ENCODE measurements at regions of chr17 and their contacts with region 1.

Region 1: DNA sequence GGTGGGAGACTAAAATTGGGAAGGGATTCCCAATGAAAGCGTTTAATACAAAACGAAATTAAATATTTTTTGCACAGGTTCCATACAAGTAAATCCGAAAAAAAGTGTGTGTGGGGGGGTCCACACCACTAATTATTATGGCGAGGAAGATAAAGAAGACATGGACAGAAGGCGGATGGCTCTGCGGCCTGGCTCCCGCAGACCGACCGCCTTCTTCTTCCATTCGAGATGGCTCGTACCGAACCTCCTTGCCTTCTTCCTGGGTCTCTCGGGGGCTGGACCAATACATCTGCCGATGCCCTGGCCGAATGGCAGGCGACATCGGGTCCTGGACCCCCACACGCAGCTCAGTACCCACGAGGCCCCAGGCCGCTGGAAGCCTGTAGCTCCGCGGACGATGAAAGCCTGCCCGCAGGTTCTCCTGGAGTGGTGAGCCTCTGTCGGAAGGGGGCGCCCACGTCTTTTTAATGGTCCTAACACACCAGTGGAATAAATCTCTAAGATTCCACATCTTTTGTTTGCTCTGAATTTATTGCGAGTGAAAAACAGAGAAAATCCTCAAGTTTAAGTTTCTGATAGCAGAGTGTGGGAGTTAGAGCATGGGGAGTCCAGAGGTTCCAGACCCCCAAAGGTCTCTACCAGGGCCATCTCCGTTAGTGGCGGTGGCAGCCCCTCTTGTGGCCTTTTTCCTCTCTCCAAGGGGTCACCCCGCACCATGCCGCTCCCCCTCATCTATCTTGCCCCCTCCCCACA is 1.4 kb downstream of the PRAC2 start:
- DNase-seq: peak; percentile 54 to 79 (median 64)
- H3K4me3 ChIP-seq: peak overlapping the region; percentile 33
- H3K4me3 Mint-ChIP-seq: peak overlapping the region; percentile 31 to 79 (median 75)
- H3K27ac ChIP-seq: no peak overlapping the region
- H3K27ac Mint-ChIP-seq: peak overlapping the region in 3 of 8 donors; percentile 38 to 72 (median 70)
- H3K4me1 ChIP-seq: peaks cover 39% of the 10 kb centered on the region
- H3K4me1 Mint-ChIP-seq: peaks cover 40 to 51% (median 43%) of the 10 kb centered on the region in 3 donors
- H3K27me3 ChIP-seq: peaks cover 92% of the 10 kb centered on the region
- H3K27me3 Mint-ChIP-seq: peaks cover 93 to 97% of the 10 kb centered on the region in 2 donors

Region 2: GRCh38 chr17:48738803-48739526 is 14.5 kb after region 1 on chr17:
- CTCF ChIA-PET with region 1: interaction called, 15 read pairs
- POLR2A ChIA-PET with region 1: no interaction called
- DNase-seq: no peak
- H3K4me3 ChIP-seq: no peak overlapping the region
- H3K4me3 Mint-ChIP-seq: peak overlapping the region in 5 of 7 donors; percentile 50 to 80 (median 62)
- H3K27ac ChIP-seq: no peak overlapping the region
- H3K27ac Mint-ChIP-seq: peak overlapping the region in 1 of 8 donors; percentile 23
- H3K4me1 ChIP-seq: no peaks in the 10 kb centered on the region
- H3K4me1 Mint-ChIP-seq: peaks cover 6 to 13% (median 7%) of the 10 kb centered on the region in 3 donors
- H3K27me3 ChIP-seq: peaks cover 70% of the 10 kb centered on the region
- H3K27me3 Mint-ChIP-seq: peaks cover 86 to 92% of the 10 kb centered on the region in 2 donors

Measured in CD8-positive, alpha-beta memory T cell (primary cell).